ENCODE measurements at regions of chr12 and their contacts with region 1.

Region 1: DNA sequence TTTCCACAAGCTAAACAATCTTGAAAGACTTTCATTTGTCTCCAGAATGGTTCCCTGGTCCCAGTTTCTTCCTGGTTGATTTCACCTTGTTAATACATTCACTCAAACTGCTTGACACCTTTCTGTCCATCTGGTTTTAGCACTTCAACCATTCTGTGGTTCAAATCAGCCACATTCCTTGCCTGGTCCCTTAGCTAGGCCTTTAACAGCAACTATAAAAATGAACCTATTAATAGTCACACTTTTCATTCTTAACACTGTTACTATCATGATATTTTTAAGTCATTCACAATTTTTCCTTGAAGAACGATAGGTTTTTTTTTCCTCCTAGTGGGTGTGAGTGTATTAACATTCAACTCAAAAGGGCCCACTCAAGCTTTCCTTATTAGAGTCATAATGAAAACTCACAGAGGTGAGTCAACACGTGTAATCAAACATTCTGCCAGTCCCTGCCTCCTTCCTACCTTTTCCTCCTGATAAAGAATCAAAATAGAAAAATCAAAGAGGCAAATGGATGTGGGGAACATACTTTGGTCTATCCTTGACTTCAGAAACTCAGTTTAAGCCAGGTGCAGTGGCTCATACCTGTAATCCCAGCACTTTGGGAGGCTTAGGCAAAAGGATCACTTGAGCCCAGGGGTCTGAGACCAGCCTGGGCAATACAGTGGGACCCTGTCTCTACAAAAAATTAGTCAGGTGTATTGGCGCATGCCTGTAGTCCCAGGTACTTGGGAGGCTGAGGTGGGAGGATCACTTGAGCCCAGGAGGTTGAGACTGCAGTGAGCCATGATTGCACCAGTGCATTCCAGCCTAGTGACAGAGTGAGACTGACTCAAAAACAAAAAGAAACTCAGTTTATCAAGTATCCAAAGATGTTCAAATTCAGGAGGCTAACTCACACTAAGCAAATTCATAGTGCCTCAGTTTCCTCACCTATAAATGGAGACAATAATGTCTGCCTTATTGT is 34.5 kb upstream of the CCNT1 start:
- DNase-seq: no peak
- ATAC-seq: no peak
- H3K4me3 ChIP-seq: no peak overlapping the region
- H3K4me3 Mint-ChIP-seq: no peak overlapping the region
- H3K27ac ChIP-seq: no peak overlapping the region
- H3K27ac Mint-ChIP-seq: no peak overlapping the region
- H3K4me1 ChIP-seq: no peaks in the 10 kb centered on the region
- H3K4me1 Mint-ChIP-seq: no peaks in the 10 kb centered on the region
- H3K27me3 ChIP-seq: no peaks in the 10 kb centered on the region
- H3K27me3 Mint-ChIP-seq: no peaks in the 10 kb centered on the region
- CTCF ChIP-seq: no peak

Region 2: DNA sequence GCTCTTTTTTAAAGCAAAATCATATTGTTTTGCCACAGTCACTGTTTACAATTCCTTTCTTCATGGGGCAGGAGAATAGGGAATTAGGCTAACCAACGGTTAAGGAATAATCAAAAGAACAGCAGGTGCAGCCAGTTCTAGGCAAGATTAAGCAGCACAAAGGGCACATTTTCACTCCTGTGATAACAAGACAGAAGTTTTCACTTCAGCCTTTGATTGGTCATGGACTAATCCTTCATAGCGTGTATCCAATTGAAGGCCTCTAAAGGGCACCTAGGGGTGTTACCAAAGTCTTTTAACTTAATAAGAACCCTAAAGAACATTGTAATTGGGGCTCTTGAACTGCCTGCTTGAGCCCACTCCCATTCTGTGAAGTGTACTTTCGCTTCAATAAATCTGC is 1464.4 kb before region 1 on chr12:
- CTCF ChIA-PET with region 1: no interaction called
- POLR2A ChIA-PET with region 1: no interaction called
- intact Hi-C with region 1: no loop called
- DNase-seq: no peak
- ATAC-seq: peak; percentile 26
- H3K4me3 ChIP-seq: no peak overlapping the region
- H3K4me3 Mint-ChIP-seq: no peak overlapping the region
- H3K27ac ChIP-seq: no peak overlapping the region
- H3K27ac Mint-ChIP-seq: peak overlapping the region; percentile 65
- H3K4me1 ChIP-seq: peaks cover 3% of the 10 kb centered on the region
- H3K4me1 Mint-ChIP-seq: peaks cover 28% of the 10 kb centered on the region
- H3K27me3 ChIP-seq: no peaks in the 10 kb centered on the region
- H3K27me3 Mint-ChIP-seq: no peaks in the 10 kb centered on the region
- CTCF ChIP-seq: no peak

Region 3: GRCh38 chr12:48795480-48796455 is 44.7 kb after region 1 on chr12:
- CTCF ChIA-PET with region 1: interaction called, 53 read pairs
- POLR2A ChIA-PET with region 1: interaction called, 4 read pairs
- intact Hi-C with region 1: loop called (anchors 1 kb)
- DNase-seq: peak; percentile 21 to 76 (median 42)
- ATAC-seq: peak; percentile 79
- H3K4me3 ChIP-seq: no peak overlapping the region
- H3K4me3 Mint-ChIP-seq: no peak overlapping the region
- H3K27ac ChIP-seq: no peak overlapping the region
- H3K27ac Mint-ChIP-seq: no peak overlapping the region
- H3K4me1 ChIP-seq: peaks cover 7% of the 10 kb centered on the region
- H3K4me1 Mint-ChIP-seq: no peaks in the 10 kb centered on the region
- H3K27me3 ChIP-seq: no peaks in the 10 kb centered on the region
- H3K27me3 Mint-ChIP-seq: peaks cover 5% of the 10 kb centered on the region
- CTCF ChIP-seq: peak; percentile 96

Region 4: GRCh38 chr12:48890657-48891418 is 139.8 kb after region 1 on chr12:
- CTCF ChIA-PET with region 1: interaction called, 3 read pairs
- POLR2A ChIA-PET with region 1: no interaction called
- intact Hi-C with region 1: loop called (anchors 2 to 5 kb)
- DNase-seq: peak; percentile 51 to 85 (median 70)
- ATAC-seq: peak; percentile 96
- H3K4me3 ChIP-seq: no peak overlapping the region
- H3K4me3 Mint-ChIP-seq: no peak overlapping the region
- H3K27ac ChIP-seq: no peak overlapping the region
- H3K27ac Mint-ChIP-seq: no peak overlapping the region
- H3K4me1 ChIP-seq: peaks cover 10% of the 10 kb centered on the region
- H3K4me1 Mint-ChIP-seq: peaks cover 5% of the 10 kb centered on the region
- H3K27me3 ChIP-seq: peaks cover 10 to 17% of the 10 kb centered on the region in 2 experiments
- H3K27me3 Mint-ChIP-seq: peaks cover 22% of the 10 kb centered on the region
- CTCF ChIP-seq: peak; percentile 86